B cell (primary cell): ENCODE measurements at regions of chr16 and their contacts with region 1.

Region 1: GRCh38 chr16:88785106-88785924 is at the start of gene PIEZO1:
- DNase-seq: peak; percentile 89
- ATAC-seq: peak; percentile 36
- H3K4me3 ChIP-seq: peak within 1 kb of the TSS in 4 of 5 experiments; percentile 48 to 71 (median 64)
- H3K4me3 Mint-ChIP-seq: peak within 1 kb of the TSS; percentile 73
- H3K27ac ChIP-seq: peak within 1 kb of the TSS; percentile 26 to 77
- H3K27ac Mint-ChIP-seq: peak within 1 kb of the TSS; percentile 77
- H3K4me1 ChIP-seq: peaks cover 52 to 55% of the 10 kb centered on the region in 2 donors
- H3K4me1 Mint-ChIP-seq: peaks cover 47% of the 10 kb centered on the region
- H3K27me3 ChIP-seq: no peaks in the 10 kb centered on the region
- H3K27me3 Mint-ChIP-seq: no peaks in the 10 kb centered on the region
- CTCF ChIP-seq: peak; percentile 87
- total RNA-seq, gene PIEZO1: 108 and 118 TPM in 2 replicates

Region 2: GRCh38 chr16:88569985-88570690 is 215.2 kb before region 1 on chr16 and contains the start of gene ZC3H18:
- CTCF ChIA-PET with region 1: no interaction called
- POLR2A ChIA-PET with region 1: no interaction called
- intact Hi-C with region 1: loop called (anchors 5 kb)
- DNase-seq: peak; percentile 99
- ATAC-seq: peak; percentile 93
- H3K4me3 ChIP-seq: peak within 1 kb of the TSS; percentile 55 to 76 (median 73)
- H3K4me3 Mint-ChIP-seq: peak within 1 kb of the TSS; percentile 90
- H3K27ac ChIP-seq: peak within 1 kb of the TSS; percentile 52 to 87
- H3K27ac Mint-ChIP-seq: peak within 1 kb of the TSS; percentile 91
- H3K4me1 ChIP-seq: peaks cover 17 to 18% of the 10 kb centered on the region in 2 donors
- H3K4me1 Mint-ChIP-seq: peaks cover 25% of the 10 kb centered on the region
- H3K27me3 ChIP-seq: no peaks in the 10 kb centered on the region
- H3K27me3 Mint-ChIP-seq: no peaks in the 10 kb centered on the region
- CTCF ChIP-seq: no peak
- total RNA-seq, gene ZC3H18: 74.2 and 84.1 TPM in 2 replicates

Region 3: GRCh38 chr16:88737298-88738150 is 47.8 kb before region 1 on chr16:
- CTCF ChIA-PET with region 1: interaction called, 138 read pairs
- POLR2A ChIA-PET with region 1: interaction called, 12 read pairs
- intact Hi-C with region 1: loop called (anchors 1 kb)
- DNase-seq: peak; percentile 84
- ATAC-seq: peak; percentile 97
- H3K4me3 ChIP-seq: no peak overlapping the region
- H3K4me3 Mint-ChIP-seq: no peak overlapping the region
- H3K27ac ChIP-seq: no peak overlapping the region
- H3K27ac Mint-ChIP-seq: no peak overlapping the region
- H3K4me1 ChIP-seq: peaks cover 5 to 20% of the 10 kb centered on the region in 2 donors
- H3K4me1 Mint-ChIP-seq: peaks cover 6% of the 10 kb centered on the region
- H3K27me3 ChIP-seq: no peaks in the 10 kb centered on the region
- H3K27me3 Mint-ChIP-seq: no peaks in the 10 kb centered on the region
- CTCF ChIP-seq: peak; percentile 99

Region 4: DNA sequence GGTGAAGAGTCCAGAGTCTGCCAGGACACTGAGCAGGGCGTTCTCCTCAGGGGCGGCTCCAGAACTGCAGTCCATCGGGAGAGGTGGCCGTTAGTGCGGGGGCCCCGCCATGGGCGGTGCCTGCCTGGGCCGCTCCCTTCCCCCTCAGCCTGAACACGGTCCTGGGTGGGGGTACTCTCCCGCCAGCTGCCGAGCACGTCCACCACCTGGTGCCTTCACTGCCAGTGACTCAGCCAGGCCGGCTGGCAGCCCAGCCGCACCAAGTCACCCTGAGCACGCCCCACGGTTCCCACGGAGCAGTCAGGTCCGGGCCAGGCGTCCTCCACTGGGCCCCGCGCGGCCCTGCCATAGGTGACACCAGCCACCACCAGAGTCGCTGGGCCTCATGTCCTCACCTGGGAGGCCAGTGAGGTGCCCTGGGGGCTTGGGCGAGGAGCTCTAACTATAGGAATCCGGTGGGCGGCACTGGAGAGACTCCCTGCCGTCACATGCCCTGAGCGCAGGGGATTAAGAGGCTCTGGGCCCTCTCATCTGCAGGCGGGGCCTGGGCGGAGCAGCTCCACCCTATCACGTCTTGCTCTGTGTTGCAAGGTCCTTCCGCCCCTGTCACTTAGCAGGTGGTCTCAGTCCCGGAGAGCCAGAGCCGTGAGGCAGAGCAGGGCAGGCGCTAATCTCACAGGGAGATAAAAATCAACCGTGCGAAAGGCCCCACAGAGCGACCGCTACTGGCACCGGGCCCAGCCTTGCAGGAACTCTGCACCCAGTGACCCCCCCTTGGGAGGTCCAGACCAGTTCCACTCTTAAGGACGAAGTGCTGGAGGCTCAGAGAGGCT is 14.6 kb before region 1 on chr16:
- CTCF ChIA-PET with region 1: interaction called, 68 read pairs
- POLR2A ChIA-PET with region 1: interaction called, 7 read pairs
- intact Hi-C with region 1: loop called (anchors 1 kb)
- DNase-seq: peak; percentile 70
- ATAC-seq: peak; percentile 42
- H3K4me3 ChIP-seq: peak overlapping the region in 2 of 5 experiments; percentile 4 to 11
- H3K4me3 Mint-ChIP-seq: peak overlapping the region; percentile 65
- H3K27ac ChIP-seq: peak overlapping the region; percentile 24 to 43
- H3K27ac Mint-ChIP-seq: peak overlapping the region; percentile 84
- H3K4me1 ChIP-seq: peaks cover 52 to 69% of the 10 kb centered on the region in 2 donors
- H3K4me1 Mint-ChIP-seq: peaks cover 53% of the 10 kb centered on the region
- H3K27me3 ChIP-seq: no peaks in the 10 kb centered on the region
- H3K27me3 Mint-ChIP-seq: no peaks in the 10 kb centered on the region
- CTCF ChIP-seq: no peak

Region 5: DNA sequence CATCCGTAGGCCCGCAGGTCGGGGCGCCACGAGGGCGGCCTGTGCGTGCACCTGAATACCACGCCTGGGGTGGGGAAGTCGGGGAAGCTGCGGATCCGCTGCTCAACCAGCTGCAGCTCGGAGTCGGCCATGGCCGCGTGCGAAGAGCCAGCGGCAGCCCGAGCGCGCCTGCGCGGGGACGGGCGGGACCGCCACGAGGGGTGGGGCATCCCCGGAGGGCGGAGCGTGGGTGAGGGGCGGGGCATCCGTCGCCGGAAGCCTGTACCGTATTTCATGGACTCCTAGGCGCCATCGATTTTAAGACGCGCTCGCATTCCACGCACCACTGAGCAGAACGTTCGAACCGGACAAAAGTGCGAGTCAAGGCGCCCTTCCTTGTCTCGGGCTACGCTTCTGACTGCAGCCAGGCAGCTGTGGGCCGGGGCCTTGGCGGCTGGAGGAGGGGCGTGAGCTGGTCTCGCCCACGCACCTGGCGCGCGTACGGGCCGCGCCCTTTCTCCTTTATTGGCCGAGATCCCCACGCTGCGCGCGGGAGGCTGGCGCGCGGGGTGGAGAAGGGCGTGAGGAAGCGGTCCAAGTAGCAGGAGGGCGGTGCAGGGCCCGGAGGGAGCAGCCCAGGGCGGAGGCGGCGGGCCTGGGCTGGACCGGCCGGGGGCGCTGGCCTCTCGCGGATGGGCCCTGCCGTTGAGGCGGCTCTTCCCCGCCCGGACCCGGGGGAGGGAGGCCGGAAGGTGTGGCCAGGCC is 26.6 kb after region 1 on chr16 and contains the start of gene APRT:
- CTCF ChIA-PET with region 1: interaction called, 16 read pairs
- POLR2A ChIA-PET with region 1: interaction called, 7 read pairs
- intact Hi-C with region 1: no loop called
- DNase-seq: peak; percentile 97
- ATAC-seq: peak; percentile 87
- H3K4me3 ChIP-seq: peak within 1 kb of the TSS; percentile 45 to 90 (median 77)
- H3K4me3 Mint-ChIP-seq: peak within 1 kb of the TSS; percentile 98
- H3K27ac ChIP-seq: peak within 1 kb of the TSS; percentile 61 to 65
- H3K27ac Mint-ChIP-seq: peak within 1 kb of the TSS; percentile 99
- H3K4me1 ChIP-seq: peaks cover 11 to 27% of the 10 kb centered on the region in 2 donors
- H3K4me1 Mint-ChIP-seq: peaks cover 19% of the 10 kb centered on the region
- H3K27me3 ChIP-seq: no peaks in the 10 kb centered on the region
- H3K27me3 Mint-ChIP-seq: no peaks in the 10 kb centered on the region
- CTCF ChIP-seq: no peak
- total RNA-seq, gene APRT: 111 and 124 TPM in 2 replicates